Activated B cell treated with CpG ODN at 0.5 μM for 24 hours (primary cell): ENCODE measurements at regions of chr11 and their contacts with region 1.

Region 1: GRCh38 chr11:84780689-84781293 is 846.4 kb downstream of the DLG2 start:
- DNase-seq: no peak
- ATAC-seq: no peak
- H3K4me3 Mint-ChIP-seq: no peak overlapping the region
- H3K27ac Mint-ChIP-seq: no peak overlapping the region
- H3K4me1 Mint-ChIP-seq: no peaks in the 10 kb centered on the region
- H3K27me3 Mint-ChIP-seq: no peaks in the 10 kb centered on the region
- CTCF ChIP-seq: no peak

Region 2: GRCh38 chr11:84524422-84525051 is 256.3 kb before region 1 on chr11:
- CTCF ChIA-PET with region 1: no interaction called
- POLR2A ChIA-PET with region 1: no interaction called
- intact Hi-C with region 1: no loop called
- DNase-seq: no peak
- ATAC-seq: no peak
- H3K4me3 Mint-ChIP-seq: no peak overlapping the region
- H3K27ac Mint-ChIP-seq: no peak overlapping the region
- H3K4me1 Mint-ChIP-seq: no peaks in the 10 kb centered on the region
- H3K27me3 Mint-ChIP-seq: peaks cover 13% of the 10 kb centered on the region
- CTCF ChIP-seq: no peak

Region 3: DNA sequence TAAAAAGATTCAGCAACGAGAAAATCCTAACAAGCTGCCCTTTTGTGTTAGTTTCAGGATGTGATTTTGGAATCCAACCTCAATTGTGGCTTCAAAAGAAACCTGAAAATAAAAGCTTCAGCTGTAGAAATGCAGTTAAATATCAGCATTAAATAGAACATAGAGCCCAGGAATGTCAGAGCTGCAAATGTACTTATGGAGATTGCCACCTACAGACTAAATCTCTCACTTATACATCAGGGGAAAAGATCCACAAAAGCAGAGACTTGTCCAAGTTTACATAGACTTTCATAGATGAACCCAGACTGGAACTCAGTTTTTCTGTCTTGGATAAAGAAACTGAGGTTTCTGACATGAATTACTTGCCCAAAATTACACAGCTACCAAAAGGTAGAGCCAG is 399.7 kb after region 1 on chr11:
- CTCF ChIA-PET with region 1: no interaction called
- POLR2A ChIA-PET with region 1: no interaction called
- intact Hi-C with region 1: loop called (anchors 1 kb)
- DNase-seq: no peak
- ATAC-seq: no peak
- H3K4me3 Mint-ChIP-seq: no peak overlapping the region
- H3K27ac Mint-ChIP-seq: no peak overlapping the region
- H3K4me1 Mint-ChIP-seq: peaks cover 18% of the 10 kb centered on the region
- H3K27me3 Mint-ChIP-seq: no peaks in the 10 kb centered on the region
- CTCF ChIP-seq: no peak